ENCODE measurements at regions of chr3 and their contacts with region 1.

Region 1: GRCh38 chr3:4656059-4656458 is 162.9 kb downstream of the ITPR1 start:
- DNase-seq: no peak
- H3K4me3 ChIP-seq: no peak overlapping the region
- CTCF ChIP-seq: peak; percentile 94

Region 2: GRCh38 chr3:4358273-4358672 is 297.8 kb before region 1 on chr3:
- CTCF ChIA-PET with region 1: no interaction called
- POLR2A ChIA-PET with region 1: no interaction called
- DNase-seq: no peak
- H3K4me3 ChIP-seq: no peak overlapping the region
- CTCF ChIP-seq: no peak

Region 3: GRCh38 chr3:4674216-4674615 is 18.2 kb after region 1 on chr3:
- CTCF ChIA-PET with region 1: interaction called, 18 read pairs
- POLR2A ChIA-PET with region 1: no interaction called
- DNase-seq: no peak
- H3K4me3 ChIP-seq: no peak overlapping the region
- CTCF ChIP-seq: no peak